ENCODE measurements at regions of chr1 and their contacts with region 1.

Region 1: GRCh38 chr1:174534789-174535188 is 87.0 kb downstream of the GPR52 start:
- DNase-seq: no peak
- H3K4me3 ChIP-seq: no peak overlapping the region
- H3K27ac ChIP-seq: no peak overlapping the region
- H3K4me1 ChIP-seq: no peaks in the 10 kb centered on the region
- H3K27me3 ChIP-seq: no peaks in the 10 kb centered on the region
- CTCF ChIP-seq: no peak
- POLR2A ChIP-seq: no peak

Region 2: DNA sequence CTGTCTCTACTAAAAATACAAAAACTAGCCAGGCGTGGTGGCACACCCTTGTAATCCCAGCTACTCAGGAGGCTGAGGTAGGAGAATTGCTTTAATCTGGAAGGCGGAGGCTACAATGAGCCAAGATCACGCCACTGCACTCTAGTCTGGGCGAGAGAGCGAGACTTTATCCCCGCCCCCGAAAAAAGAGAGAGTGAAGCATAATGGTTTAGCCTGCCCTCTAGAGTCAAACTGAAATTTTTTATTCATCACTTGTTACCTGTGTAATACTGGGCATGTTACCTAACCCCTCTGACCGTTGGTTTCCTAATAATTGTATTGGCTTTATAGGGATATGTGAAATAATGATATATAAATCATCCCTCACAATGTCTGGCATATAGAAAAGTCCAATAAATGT is 68.2 kb before region 1 on chr1:
- intact Hi-C with region 1: no loop called
- DNase-seq: no peak
- H3K4me3 ChIP-seq: no peak overlapping the region
- H3K27ac ChIP-seq: no peak overlapping the region
- H3K4me1 ChIP-seq: no peaks in the 10 kb centered on the region
- H3K27me3 ChIP-seq: no peaks in the 10 kb centered on the region
- CTCF ChIP-seq: no peak
- POLR2A ChIP-seq: no peak

Region 3: GRCh38 chr1:174572771-174573170 is 38.0 kb after region 1 on chr1:
- intact Hi-C with region 1: loop called (anchors 2 kb)
- DNase-seq: no peak
- H3K4me3 ChIP-seq: no peak overlapping the region
- H3K27ac ChIP-seq: no peak overlapping the region
- H3K4me1 ChIP-seq: no peaks in the 10 kb centered on the region
- H3K27me3 ChIP-seq: no peaks in the 10 kb centered on the region
- CTCF ChIP-seq: no peak
- POLR2A ChIP-seq: no peak

Measured in breast epithelium (tissue), 4 donors.